Naive thymus-derived CD4-positive, alpha-beta T cell (primary cell): ENCODE measurements at regions of chr4 and their contacts with region 1.

Region 1: GRCh38 chr4:80989921-80990544 is 40.5 kb upstream of the BMP3 start:
- DNase-seq: peak in 7 of 9 donors; percentile 11 to 61 (median 58)
- ATAC-seq: peak; percentile 51
- H3K4me3 ChIP-seq: no peak overlapping the region
- H3K4me3 Mint-ChIP-seq: peak overlapping the region in 1 of 10 donors; percentile 30
- H3K27ac ChIP-seq: no peak overlapping the region
- H3K27ac Mint-ChIP-seq: no peak overlapping the region
- H3K4me1 ChIP-seq: no peaks in the 10 kb centered on the region
- H3K4me1 Mint-ChIP-seq: peaks cover 0 to 6% (median 0%) of the 10 kb centered on the region in 7 donors
- H3K27me3 ChIP-seq: no peaks in the 10 kb centered on the region
- H3K27me3 Mint-ChIP-seq: peaks cover 0 to 10% (median 4%) of the 10 kb centered on the region in 5 donors

Region 2: GRCh38 chr4:80619070-80619674 is 370.9 kb before region 1 on chr4:
- CTCF ChIA-PET with region 1: interaction called, 3 read pairs
- POLR2A ChIA-PET with region 1: no interaction called
- intact Hi-C with region 1: loop called in 1 of 2 experiments (anchors 5 kb)
- DNase-seq: no peak
- ATAC-seq: no peak
- H3K4me3 ChIP-seq: no peak overlapping the region
- H3K4me3 Mint-ChIP-seq: no peak overlapping the region
- H3K27ac ChIP-seq: no peak overlapping the region
- H3K27ac Mint-ChIP-seq: no peak overlapping the region
- H3K4me1 ChIP-seq: no peaks in the 10 kb centered on the region
- H3K4me1 Mint-ChIP-seq: peaks cover 0 to 8% (median 0%) of the 10 kb centered on the region in 7 donors
- H3K27me3 ChIP-seq: no peaks in the 10 kb centered on the region
- H3K27me3 Mint-ChIP-seq: no peaks in the 10 kb centered on the region

Region 3: GRCh38 chr4:81040012-81040659 is 50.1 kb after region 1 on chr4:
- CTCF ChIA-PET with region 1: interaction called, 18 read pairs
- POLR2A ChIA-PET with region 1: no interaction called
- intact Hi-C with region 1: loop called in 1 of 2 experiments (anchors 1 kb)
- DNase-seq: peak in 6 of 9 donors; percentile 26 to 54 (median 52)
- ATAC-seq: peak; percentile 47
- H3K4me3 ChIP-seq: no peak overlapping the region
- H3K4me3 Mint-ChIP-seq: no peak overlapping the region
- H3K27ac ChIP-seq: no peak overlapping the region
- H3K27ac Mint-ChIP-seq: no peak overlapping the region
- H3K4me1 ChIP-seq: no peaks in the 10 kb centered on the region
- H3K4me1 Mint-ChIP-seq: no peaks in the 10 kb centered on the region
- H3K27me3 ChIP-seq: no peaks in the 10 kb centered on the region
- H3K27me3 Mint-ChIP-seq: peaks cover 10 to 28% (median 20%) of the 10 kb centered on the region in 5 donors

Region 4: GRCh38 chr4:81351654-81352445 is 361.8 kb after region 1 on chr4:
- CTCF ChIA-PET with region 1: no interaction called
- POLR2A ChIA-PET with region 1: no interaction called
- intact Hi-C with region 1: loop called in 1 of 2 experiments (anchors 5 kb)
- DNase-seq: peak; percentile 21 to 59 (median 49)
- ATAC-seq: peak; percentile 73
- H3K4me3 ChIP-seq: no peak overlapping the region
- H3K4me3 Mint-ChIP-seq: no peak overlapping the region
- H3K27ac ChIP-seq: no peak overlapping the region
- H3K27ac Mint-ChIP-seq: no peak overlapping the region
- H3K4me1 ChIP-seq: no peaks in the 10 kb centered on the region
- H3K4me1 Mint-ChIP-seq: peaks cover 0 to 2% (median 0%) of the 10 kb centered on the region in 7 donors
- H3K27me3 ChIP-seq: no peaks in the 10 kb centered on the region
- H3K27me3 Mint-ChIP-seq: peaks cover 0 to 24% (median 11%) of the 10 kb centered on the region in 5 donors

Region 5: DNA sequence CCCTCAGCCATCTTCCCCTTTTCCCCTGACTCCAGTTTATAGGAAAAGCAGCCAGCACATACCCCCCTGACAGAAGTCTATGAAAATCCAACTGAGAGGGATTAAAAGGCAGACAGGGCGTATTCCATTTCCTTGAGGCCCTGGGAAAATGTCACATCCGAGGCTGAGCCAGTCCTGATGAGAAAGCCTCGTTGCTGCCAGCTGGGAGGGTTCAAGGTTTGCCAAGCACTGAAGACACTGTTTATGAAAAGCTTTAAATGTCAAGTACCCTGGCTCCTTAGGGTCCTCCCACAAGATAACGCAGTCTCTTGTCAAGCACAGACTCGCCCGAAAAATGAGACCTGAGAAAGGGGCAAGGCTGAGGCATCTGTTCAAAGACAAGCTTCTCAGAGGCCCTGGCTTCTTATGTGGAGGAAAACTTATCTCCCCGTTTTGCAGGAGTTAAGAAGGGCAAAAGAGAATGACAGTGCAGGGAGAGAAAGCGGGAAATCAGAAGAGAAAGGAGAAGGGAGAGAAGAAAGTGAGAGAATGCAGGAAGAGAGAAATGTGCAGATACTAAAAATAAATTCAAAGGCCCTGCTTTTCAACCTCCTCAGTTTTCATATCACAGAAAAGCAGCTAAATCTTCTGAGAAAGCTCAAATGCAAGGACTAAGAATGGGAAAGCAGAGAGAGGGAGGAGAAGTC is 1763.8 kb after region 1 on chr4:
- CTCF ChIA-PET with region 1: no interaction called
- POLR2A ChIA-PET with region 1: no interaction called
- intact Hi-C with region 1: no loop called
- DNase-seq: no peak
- ATAC-seq: no peak
- H3K4me3 ChIP-seq: no peak overlapping the region
- H3K4me3 Mint-ChIP-seq: no peak overlapping the region
- H3K27ac ChIP-seq: no peak overlapping the region
- H3K27ac Mint-ChIP-seq: no peak overlapping the region
- H3K4me1 ChIP-seq: no peaks in the 10 kb centered on the region
- H3K4me1 Mint-ChIP-seq: peaks cover 0 to 2% (median 0%) of the 10 kb centered on the region in 7 donors
- H3K27me3 ChIP-seq: no peaks in the 10 kb centered on the region
- H3K27me3 Mint-ChIP-seq: peaks cover 0 to 26% (median 9%) of the 10 kb centered on the region in 5 donors